OCI-LY7 (cell line): ENCODE measurements at regions of chr10 and their contacts with region 1.

Region 1: DNA sequence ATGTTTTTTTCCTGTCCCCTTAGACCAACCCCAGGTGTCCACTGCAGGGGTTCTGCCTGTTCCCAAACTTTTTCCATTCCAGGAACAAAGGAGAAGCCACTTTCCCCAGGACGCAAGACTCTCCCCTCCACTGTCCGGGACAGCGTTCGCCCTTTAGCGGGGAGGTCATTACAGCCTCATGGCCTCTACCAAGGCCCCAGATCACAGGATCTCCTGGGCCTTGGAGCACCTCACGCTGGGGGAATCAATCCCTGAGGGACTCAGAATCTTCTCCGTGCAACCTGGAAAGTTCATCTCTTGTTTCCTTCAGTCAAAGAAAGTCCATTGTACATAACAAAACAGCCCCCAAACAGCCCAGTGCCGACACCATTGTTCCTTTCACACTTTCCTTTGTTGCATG is 41.2 kb downstream of the MKI67 start:
- DNase-seq: no peak
- H3K4me3 ChIP-seq: no peak overlapping the region
- H3K27ac ChIP-seq: no peak overlapping the region
- H3K4me1 ChIP-seq: peaks cover 2% of the 10 kb centered on the region
- CTCF ChIP-seq: no peak

Region 2: DNA sequence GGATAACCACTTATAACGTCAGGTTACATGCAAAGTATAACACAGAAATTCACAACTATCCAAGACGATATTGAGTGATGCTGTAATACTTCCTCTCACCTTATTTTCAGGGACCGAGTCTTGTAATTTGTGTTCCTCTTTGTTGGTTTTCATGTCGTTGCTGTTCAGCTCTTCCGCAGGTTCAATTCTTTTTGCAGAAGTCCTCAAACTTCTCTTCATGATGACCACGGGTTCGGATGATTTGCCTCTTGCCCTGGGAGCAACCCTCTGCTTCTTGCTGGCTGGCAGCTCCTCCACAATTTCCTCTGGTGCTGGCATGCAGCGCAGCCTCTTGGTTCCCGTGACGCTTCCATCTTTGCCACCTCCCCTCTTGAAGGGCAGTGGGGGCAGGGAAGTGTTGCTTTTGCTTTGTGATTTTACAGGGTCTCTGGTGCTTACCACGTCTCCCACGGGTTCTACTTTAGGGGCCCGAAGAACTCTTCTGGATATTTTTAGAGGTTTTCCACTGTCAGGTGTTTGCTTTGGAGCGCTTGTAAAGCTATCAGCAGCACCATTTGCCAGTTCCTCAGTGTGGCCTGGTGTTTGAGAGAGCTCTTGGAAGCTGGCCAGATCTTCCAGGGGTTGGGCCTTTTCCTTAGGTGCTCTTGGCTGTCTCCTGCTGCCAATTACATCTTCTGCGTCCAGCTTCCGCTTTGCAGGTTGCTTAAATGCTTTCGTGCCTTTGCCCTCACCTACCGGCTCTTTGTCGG is 17.7 kb after region 1 on chr10:
- CTCF ChIA-PET with region 1: no interaction called
- POLR2A ChIA-PET with region 1: interaction called, 4 read pairs
- intact Hi-C with region 1: loop called (anchors 1 kb)
- DNase-seq: no peak
- H3K4me3 ChIP-seq: no peak overlapping the region
- H3K27ac ChIP-seq: no peak overlapping the region
- H3K4me1 ChIP-seq: no peaks in the 10 kb centered on the region
- CTCF ChIP-seq: no peak